ENCODE measurements at regions of chr3 and their contacts with region 1.

Region 1: DNA sequence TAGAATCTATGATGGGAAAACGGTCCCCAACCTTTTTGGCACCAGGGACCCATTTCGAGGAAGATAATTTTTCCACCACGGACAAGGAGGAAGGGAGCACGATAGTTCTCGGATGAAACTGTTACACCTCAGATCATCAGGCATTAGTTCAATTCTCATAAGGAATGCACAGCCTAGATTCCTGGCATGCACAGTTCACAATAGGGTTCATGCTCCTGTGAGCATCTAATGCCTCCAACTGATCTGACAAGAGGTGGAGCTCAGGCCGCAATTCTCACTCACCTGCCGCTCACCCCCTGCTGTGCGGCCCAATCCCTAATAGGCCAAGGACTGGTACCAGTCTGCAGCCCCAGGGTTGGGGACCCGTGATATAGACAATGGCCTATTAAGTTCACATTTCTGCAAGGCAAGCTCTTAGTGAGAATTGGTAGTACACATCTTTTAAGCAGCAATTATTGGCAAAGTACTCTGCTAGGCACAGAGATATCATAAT is 26.5 kb downstream of the CD200R1 start:
- DNase-seq: no peak
- ATAC-seq: no peak
- H3K4me3 ChIP-seq: no peak overlapping the region
- H3K27ac ChIP-seq: no peak overlapping the region
- H3K4me1 ChIP-seq: no peaks in the 10 kb centered on the region
- H3K27me3 ChIP-seq: 0 out of 2 replicates have a peak, but pooled peaks cover 1% of the 10 kb centered on the region
- CTCF ChIP-seq: no peak
- POLR2A ChIP-seq: no peak
- RAD21 ChIP-seq: no peak

Region 2: GRCh38 chr3:112908252-112908651 is 40.1 kb before region 1 on chr3:
- CTCF ChIA-PET with region 1: no interaction called
- POLR2A ChIA-PET with region 1: no interaction called
- dilution Hi-C with region 1: no loop called
- in situ Hi-C with region 1: no loop called
- intact Hi-C with region 1: loop called (anchors 5 kb)
- DNase-seq: no peak
- ATAC-seq: no peak
- H3K4me3 ChIP-seq: no peak overlapping the region
- H3K27ac ChIP-seq: no peak overlapping the region
- H3K4me1 ChIP-seq: no peaks in the 10 kb centered on the region
- H3K27me3 ChIP-seq: no peaks in the 10 kb centered on the region
- CTCF ChIP-seq: no peak
- POLR2A ChIP-seq: no peak
- RAD21 ChIP-seq: no peak

Region 3: DNA sequence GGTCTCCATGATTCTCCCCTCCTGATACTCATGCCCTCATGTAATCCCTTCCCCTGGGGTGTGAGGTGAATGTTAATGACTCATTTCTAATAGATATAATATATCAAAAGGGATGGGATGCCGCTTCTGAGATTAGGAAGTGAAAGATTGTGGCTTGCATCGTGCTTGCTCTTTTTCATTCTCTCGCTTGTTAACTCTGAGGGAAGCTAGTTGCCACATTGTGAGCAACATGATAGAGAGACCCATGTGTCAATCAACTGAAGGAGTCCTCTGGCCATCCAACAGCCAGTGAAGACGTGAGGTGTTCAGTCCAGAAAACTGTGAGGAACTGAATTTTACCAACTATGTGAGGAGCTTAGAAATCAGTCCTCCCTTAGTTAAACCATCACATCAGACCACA is 1259.4 kb after region 1 on chr3:
- CTCF ChIA-PET with region 1: no interaction called
- POLR2A ChIA-PET with region 1: no interaction called
- dilution Hi-C with region 1: no loop called
- in situ Hi-C with region 1: no loop called
- intact Hi-C with region 1: loop called (anchors 5 kb)
- DNase-seq: no peak
- ATAC-seq: no peak
- H3K4me3 ChIP-seq: no peak overlapping the region
- H3K27ac ChIP-seq: no peak overlapping the region
- H3K4me1 ChIP-seq: no peaks in the 10 kb centered on the region
- H3K27me3 ChIP-seq: peaks cover 7% of the 10 kb centered on the region
- CTCF ChIP-seq: no peak
- POLR2A ChIP-seq: no peak
- RAD21 ChIP-seq: no peak